Gastrocnemius medialis (tissue), 4 donors: ENCODE measurements at regions of chr3 and their contacts with region 1.

Region 1: DNA sequence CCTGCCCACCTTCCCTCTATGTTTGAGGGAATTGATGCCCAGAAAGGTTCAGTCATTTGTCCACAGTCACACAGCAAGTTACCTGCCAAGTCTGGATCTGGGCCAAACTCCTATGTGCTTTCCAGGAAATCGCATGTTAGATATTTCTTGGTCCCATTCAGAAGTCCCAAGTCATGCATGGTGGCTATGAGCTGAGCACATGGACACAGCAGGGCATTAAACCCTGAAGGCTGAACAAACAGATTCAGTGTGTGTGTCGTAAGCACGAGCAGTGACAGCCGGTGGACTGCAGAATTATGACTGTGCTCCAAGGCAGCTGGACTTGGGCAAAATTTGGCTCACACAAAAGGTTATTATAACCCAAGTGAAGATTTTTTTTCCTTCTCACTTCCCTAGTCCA is 11.4 kb upstream of the SLC6A6 start:
- DNase-seq: peak; percentile 88 to 94
- ATAC-seq: peak; percentile 86 to 87
- H3K4me3 ChIP-seq: no peak overlapping the region
- H3K27ac ChIP-seq: peak overlapping the region; percentile 90 to 99 (median 94)
- H3K4me1 ChIP-seq: peaks cover 31 to 34% of the 10 kb centered on the region in 2 donors
- H3K27me3 ChIP-seq: no peaks in the 10 kb centered on the region
- CTCF ChIP-seq: no peak
- POLR2A ChIP-seq: peak in 1 of 2 donors; percentile 21

Region 2: GRCh38 chr3:14301558-14301957 is 89.5 kb before region 1 on chr3:
- in situ Hi-C with region 1: no loop called
- intact Hi-C with region 1: loop called (anchors 5 kb)
- DNase-seq: peak; percentile 91 to 98
- ATAC-seq: peak; percentile 73 to 80
- H3K4me3 ChIP-seq: no peak overlapping the region
- H3K27ac ChIP-seq: peak overlapping the region; percentile 80 to 87 (median 83)
- H3K4me1 ChIP-seq: peaks cover 41 to 50% of the 10 kb centered on the region in 2 donors
- H3K27me3 ChIP-seq: no peaks in the 10 kb centered on the region
- CTCF ChIP-seq: no peak
- POLR2A ChIP-seq: peak; percentile 62 to 66

Region 3: GRCh38 chr3:14319654-14320182 is 71.3 kb before region 1 on chr3:
- in situ Hi-C with region 1: loop called in 1 of 4 experiments (anchors 10 kb)
- intact Hi-C with region 1: no loop called
- DNase-seq: peak in 1 of 2 donors; percentile 58
- ATAC-seq: peak in 1 of 2 donors; percentile 16
- H3K4me3 ChIP-seq: no peak overlapping the region
- H3K27ac ChIP-seq: peak overlapping the region; percentile 78 to 95 (median 88)
- H3K4me1 ChIP-seq: peaks cover 30 to 35% of the 10 kb centered on the region in 2 donors
- H3K27me3 ChIP-seq: no peaks in the 10 kb centered on the region
- CTCF ChIP-seq: no peak
- POLR2A ChIP-seq: no peak

Region 4: DNA sequence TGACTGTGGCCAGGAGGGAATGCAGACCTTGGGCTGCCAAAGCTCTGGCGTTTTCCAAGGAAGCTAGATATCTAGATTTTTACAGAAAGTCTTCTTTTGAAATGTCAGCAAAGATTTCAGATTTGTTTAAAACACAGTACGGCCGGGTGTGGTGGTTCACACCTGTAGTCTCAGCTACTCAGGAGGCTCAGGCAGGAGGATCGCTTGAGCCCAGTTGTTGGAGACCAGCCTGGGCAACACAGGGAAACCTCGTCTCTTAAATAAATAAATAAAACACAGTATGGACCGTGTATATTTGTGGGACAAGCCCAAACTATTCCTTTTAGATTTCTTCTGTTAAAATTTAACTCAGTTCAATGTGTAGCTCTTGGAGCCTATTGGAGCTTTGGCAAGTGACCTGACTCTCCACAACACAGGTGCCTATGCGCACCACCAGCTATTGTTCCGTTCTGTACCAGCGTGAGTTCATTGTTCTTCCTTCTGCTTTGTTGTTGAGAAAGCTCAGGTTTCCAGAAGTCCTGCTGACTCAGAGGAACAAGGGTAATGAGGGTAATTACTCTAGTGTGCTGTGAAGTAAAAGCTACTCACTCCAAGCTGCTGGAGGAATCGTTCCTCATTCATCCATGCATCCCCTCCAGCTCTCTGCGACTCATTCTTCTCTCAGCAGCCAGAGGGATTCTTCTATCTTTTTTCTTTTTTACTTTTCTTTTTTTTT is 61.8 kb before region 1 on chr3:
- in situ Hi-C with region 1: loop called in 1 of 4 experiments (anchors 10 kb)
- intact Hi-C with region 1: loop called (anchors 2 kb)
- DNase-seq: no peak
- ATAC-seq: peak in 1 of 2 donors; percentile 46
- H3K4me3 ChIP-seq: no peak overlapping the region
- H3K27ac ChIP-seq: peak overlapping the region; percentile 44 to 95 (median 79)
- H3K4me1 ChIP-seq: peaks cover 19 to 36% of the 10 kb centered on the region in 2 donors
- H3K27me3 ChIP-seq: no peaks in the 10 kb centered on the region
- CTCF ChIP-seq: no peak
- POLR2A ChIP-seq: no peak

Region 5: GRCh38 chr3:14335774-14336756 is 55.0 kb before region 1 on chr3:
- in situ Hi-C with region 1: no loop called
- intact Hi-C with region 1: loop called (anchors 2 kb)
- DNase-seq: peak; percentile 74 to 82
- ATAC-seq: peak; percentile 84 to 85
- H3K4me3 ChIP-seq: no peak overlapping the region
- H3K27ac ChIP-seq: peak overlapping the region; percentile 29 to 79 (median 64)
- H3K4me1 ChIP-seq: peaks cover 14 to 17% of the 10 kb centered on the region in 2 donors
- H3K27me3 ChIP-seq: no peaks in the 10 kb centered on the region
- CTCF ChIP-seq: peak in 2 of 5 experiments; percentile 32 to 34
- POLR2A ChIP-seq: no peak

Region 6: GRCh38 chr3:14371573-14372474 is 19.2 kb before region 1 on chr3:
- in situ Hi-C with region 1: no loop called
- intact Hi-C with region 1: loop called (anchors 2 kb)
- DNase-seq: peak; percentile 91 to 96
- ATAC-seq: peak; percentile 71 to 75
- H3K4me3 ChIP-seq: no peak overlapping the region
- H3K27ac ChIP-seq: peak overlapping the region; percentile 84 to 91 (median 85)
- H3K4me1 ChIP-seq: peaks cover 56 to 64% of the 10 kb centered on the region in 2 donors
- H3K27me3 ChIP-seq: no peaks in the 10 kb centered on the region
- CTCF ChIP-seq: peak in 1 of 5 experiments; percentile 23
- POLR2A ChIP-seq: peak; percentile 67 to 73

Region 7: DNA sequence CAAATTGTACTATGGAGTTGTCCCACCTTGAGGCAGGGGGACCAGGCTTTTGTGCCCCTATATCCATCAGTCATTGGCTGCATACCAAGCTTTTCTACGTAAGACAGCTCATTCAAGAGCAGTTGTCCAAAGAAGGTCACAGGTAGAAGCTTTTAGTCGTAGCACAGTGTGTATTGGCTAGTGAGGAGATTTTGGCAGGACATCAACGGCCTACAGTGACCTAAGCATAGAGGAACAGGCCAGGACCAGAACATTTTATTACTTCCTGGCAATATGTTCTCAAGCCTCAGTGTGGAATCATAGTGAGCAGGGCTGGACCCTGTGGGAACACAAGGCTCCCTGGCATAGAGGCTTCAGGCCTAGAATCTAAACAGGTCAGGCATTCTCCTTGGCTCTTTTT is 1512.1 kb after region 1 on chr3:
- in situ Hi-C with region 1: no loop called
- intact Hi-C with region 1: no loop called
- DNase-seq: peak; percentile 80 to 87
- ATAC-seq: peak; percentile 84 to 91
- H3K4me3 ChIP-seq: no peak overlapping the region
- H3K27ac ChIP-seq: peak overlapping the region; percentile 81 to 95 (median 87)
- H3K4me1 ChIP-seq: peaks cover 22 to 31% of the 10 kb centered on the region in 2 donors
- H3K27me3 ChIP-seq: no peaks in the 10 kb centered on the region
- CTCF ChIP-seq: no peak
- POLR2A ChIP-seq: peak in 1 of 2 donors; percentile 21